Activated CD4-positive, alpha-beta T cell treated with anti-CD3 and anti-CD28 coated beads, Interleukin-2, amount 10 ng/mL, durations not matched to agents 24 days and 14 days (primary cell): ENCODE measurements at regions of chr2 and their contacts with region 1.

Region 1: DNA sequence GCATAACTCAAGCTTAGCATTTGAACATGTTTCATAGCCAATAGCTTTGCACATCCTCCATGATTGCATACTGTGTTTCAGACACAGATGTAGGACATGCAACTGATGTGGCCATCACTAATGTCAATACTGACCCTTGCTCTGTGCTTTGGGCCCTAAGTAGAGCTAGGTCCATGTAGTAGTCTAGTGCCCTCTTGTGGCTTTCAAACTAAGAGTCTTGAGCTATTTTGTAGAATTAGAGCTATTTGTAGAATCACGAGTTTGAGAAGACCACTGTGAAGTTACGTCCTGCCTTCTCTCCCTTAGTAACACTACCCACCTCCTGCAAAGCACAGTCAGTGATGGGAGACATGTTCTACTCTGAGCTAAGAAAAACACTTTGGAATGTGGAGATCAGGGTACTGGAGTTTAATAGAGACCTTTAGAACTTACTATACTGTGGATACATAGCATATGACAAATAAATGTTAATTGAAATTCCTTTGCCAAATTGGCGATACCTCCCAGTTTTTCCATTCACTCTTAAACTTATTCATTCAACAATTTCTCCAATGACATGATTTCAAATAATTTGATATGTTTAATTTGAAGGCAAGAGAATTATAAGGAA is 306.5 kb upstream of the TNP1 start:
- DNase-seq: no peak
- H3K4me3 Mint-ChIP-seq: no peak overlapping the region
- H3K27ac Mint-ChIP-seq: no peak overlapping the region
- H3K4me1 Mint-ChIP-seq: peaks cover 20% of the 10 kb centered on the region
- H3K27me3 Mint-ChIP-seq: peaks cover 9% of the 10 kb centered on the region

Region 2: GRCh38 chr2:216698895-216699294 is 467.5 kb before region 1 on chr2:
- intact Hi-C with region 1: loop called (anchors 1 kb)
- DNase-seq: peak; percentile 77
- H3K4me3 Mint-ChIP-seq: no peak overlapping the region
- H3K27ac Mint-ChIP-seq: no peak overlapping the region
- H3K4me1 Mint-ChIP-seq: peaks cover 4% of the 10 kb centered on the region
- H3K27me3 Mint-ChIP-seq: peaks cover 45% of the 10 kb centered on the region

Region 3: GRCh38 chr2:216777650-216778273 is 388.6 kb before region 1 on chr2:
- intact Hi-C with region 1: loop called (anchors 1 kb)
- DNase-seq: peak; percentile 86
- H3K4me3 Mint-ChIP-seq: no peak overlapping the region
- H3K27ac Mint-ChIP-seq: no peak overlapping the region
- H3K4me1 Mint-ChIP-seq: peaks cover 8% of the 10 kb centered on the region
- H3K27me3 Mint-ChIP-seq: peaks cover 20% of the 10 kb centered on the region

Region 4: DNA sequence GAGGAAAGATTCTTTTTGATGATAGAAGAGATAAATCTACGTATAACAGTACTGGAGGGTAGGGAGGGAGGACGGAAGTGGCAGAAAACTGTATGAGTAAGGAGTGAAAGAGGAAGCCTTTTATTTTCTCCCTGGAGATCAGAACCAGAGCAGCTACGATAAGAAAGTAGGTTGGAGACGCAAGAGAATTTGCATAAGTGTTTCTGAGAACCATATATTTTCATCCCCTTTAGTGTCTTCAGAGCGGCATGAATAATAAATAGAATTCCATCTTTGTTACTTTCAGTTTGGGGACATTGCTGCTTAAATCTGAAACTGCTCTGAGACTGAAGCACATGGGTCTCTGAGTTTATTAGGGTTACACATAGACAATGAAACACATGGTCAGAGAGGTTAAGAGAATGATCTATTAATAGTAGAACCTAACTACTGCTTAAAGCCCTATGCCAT is 76.3 kb before region 1 on chr2:
- intact Hi-C with region 1: loop called (anchors 5 kb)
- DNase-seq: peak; percentile 67
- H3K4me3 Mint-ChIP-seq: peak overlapping the region; percentile 54
- H3K27ac Mint-ChIP-seq: peak overlapping the region; percentile 74
- H3K4me1 Mint-ChIP-seq: peaks cover 43% of the 10 kb centered on the region
- H3K27me3 Mint-ChIP-seq: no peaks in the 10 kb centered on the region

Region 5: DNA sequence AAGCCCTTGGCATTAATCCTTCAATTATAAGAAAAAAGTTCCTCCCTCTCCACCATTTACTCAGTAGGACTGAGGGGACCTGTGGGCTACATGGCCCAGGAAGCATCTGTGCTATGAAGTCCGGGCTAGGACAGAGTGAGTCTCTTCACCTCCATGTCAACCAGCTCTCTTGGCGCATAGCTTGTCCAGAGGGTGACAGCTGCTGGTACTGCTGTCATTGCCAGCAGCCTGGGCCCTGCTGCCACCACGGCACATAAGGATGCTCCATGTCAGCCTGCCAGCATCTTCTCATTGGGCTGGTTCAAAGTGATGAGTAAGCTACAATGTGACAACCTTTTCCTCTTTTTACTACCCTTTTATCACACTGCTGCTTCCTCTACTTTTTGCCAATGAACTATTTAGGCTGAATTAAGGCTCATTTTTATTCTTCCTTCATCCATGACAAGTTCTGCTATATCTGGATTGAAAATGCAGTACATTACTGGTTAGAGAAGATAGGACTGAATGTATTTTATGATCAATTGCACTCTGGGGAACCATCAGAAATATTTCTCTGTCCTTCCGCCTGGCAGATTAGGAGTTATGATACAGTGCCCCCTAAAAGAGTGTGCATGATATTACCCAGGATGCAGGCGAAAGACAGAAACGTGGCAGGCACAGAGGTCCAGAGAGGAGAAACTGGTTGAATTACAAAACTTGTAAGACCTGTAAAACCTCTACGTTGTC is 47.6 kb before region 1 on chr2:
- intact Hi-C with region 1: no loop called
- DNase-seq: peak; percentile 45
- H3K4me3 Mint-ChIP-seq: no peak overlapping the region
- H3K27ac Mint-ChIP-seq: no peak overlapping the region
- H3K4me1 Mint-ChIP-seq: peaks cover 7% of the 10 kb centered on the region
- H3K27me3 Mint-ChIP-seq: peaks cover 10% of the 10 kb centered on the region

Region 6: DNA sequence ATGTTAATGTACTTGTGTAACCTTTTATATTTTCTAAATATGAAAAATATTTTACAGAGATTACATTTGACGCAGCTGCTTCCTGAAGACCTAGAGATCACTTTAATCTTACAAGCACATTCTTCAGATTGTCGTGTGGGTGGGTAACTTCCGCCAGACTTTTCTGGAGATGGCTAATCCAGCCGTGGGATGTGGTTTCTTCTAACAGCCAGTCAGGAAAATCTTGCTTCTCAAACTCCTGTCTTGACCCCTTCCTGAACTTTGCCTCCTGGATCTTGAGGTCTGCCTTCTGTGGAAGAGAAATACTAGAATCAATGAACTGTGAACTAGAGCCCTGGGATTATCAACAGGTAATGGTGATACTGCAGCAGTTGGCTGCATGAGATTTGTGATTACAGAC is 95.1 kb after region 1 on chr2:
- intact Hi-C with region 1: no loop called
- DNase-seq: no peak
- H3K4me3 Mint-ChIP-seq: no peak overlapping the region
- H3K27ac Mint-ChIP-seq: no peak overlapping the region
- H3K4me1 Mint-ChIP-seq: no peaks in the 10 kb centered on the region
- H3K27me3 Mint-ChIP-seq: peaks cover 9% of the 10 kb centered on the region